GM12878 (cell line): ENCODE measurements at regions of chr2 and their contacts with region 1.

Region 1: GRCh38 chr2:27303093-27304025 is 4.9 kb downstream of the UCN start:
- DNase-seq: no peak
- ATAC-seq: peak; percentile 82
- H3K4me3 ChIP-seq: peak overlapping the region; percentile 48; the same call in 1 of the 2 replicates
- H3K27ac ChIP-seq: no peak overlapping the region
- H3K4me1 ChIP-seq: no peaks in the 10 kb centered on the region
- H3K27me3 ChIP-seq: no peaks in the 10 kb centered on the region; a peak in 1 of 4 replicates
- CTCF ChIP-seq: peak; percentile 75 to 83 (median 80)
- EP300 ChIP-seq: no peak
- POLR2A ChIP-seq: no peak
- RAD21 ChIP-seq: peak; percentile 72

Region 2: GRCh38 chr2:26964446-26965130 is 338.8 kb before region 1 on chr2:
- CTCF ChIA-PET with region 1: interaction called, 9 read pairs
- POLR2A ChIA-PET with region 1: no interaction called
- RAD21 ChIA-PET with region 1: interaction called, 9 read pairs
- SMC1A ChIA-PET with region 1: interaction called, 5 read pairs
- in situ Hi-C with region 1: no loop called
- intact Hi-C with region 1: loop called (anchors 5 kb)
- DNase-seq: no peak
- ATAC-seq: no peak
- H3K4me3 ChIP-seq: no peak overlapping the region
- H3K27ac ChIP-seq: no peak overlapping the region
- H3K4me1 ChIP-seq: no peaks in the 10 kb centered on the region
- H3K27me3 ChIP-seq: peaks cover 1 to 2% of the 10 kb centered on the region in 2 experiments; a peak in 1 of 4 replicates
- CTCF ChIP-seq: no peak
- EP300 ChIP-seq: no peak
- POLR2A ChIP-seq: no peak
- RAD21 ChIP-seq: no peak

Region 3: GRCh38 chr2:27118525-27119329 is 184.6 kb before region 1 on chr2 and contains the start of gene CGREF1:
- CTCF ChIA-PET with region 1: no interaction called
- POLR2A ChIA-PET with region 1: no interaction called
- RAD21 ChIA-PET with region 1: no interaction called
- SMC1A ChIA-PET with region 1: no interaction called
- in situ Hi-C with region 1: no loop called
- intact Hi-C with region 1: no loop called
- DNase-seq: no peak
- ATAC-seq: no peak
- H3K4me3 ChIP-seq: no peak within 1 kb of the TSS
- H3K27ac ChIP-seq: no peak within 1 kb of the TSS
- H3K4me1 ChIP-seq: peaks cover 1% of the 10 kb centered on the region; the same call in 1 of the 2 replicates
- H3K27me3 ChIP-seq: peaks cover 6 to 7% of the 10 kb centered on the region in 2 experiments
- CTCF ChIP-seq: no peak
- EP300 ChIP-seq: no peak
- POLR2A ChIP-seq: no peak
- RAD21 ChIP-seq: no peak
- polyA plus RNA-seq, gene CGREF1: not detected

Region 4: GRCh38 chr2:27133905-27134780 is 169.2 kb before region 1 on chr2 and contains the start of gene PREB:
- CTCF ChIA-PET with region 1: interaction called, 14 read pairs
- POLR2A ChIA-PET with region 1: no interaction called
- RAD21 ChIA-PET with region 1: no interaction called
- SMC1A ChIA-PET with region 1: interaction called, 7 read pairs
- in situ Hi-C with region 1: no loop called
- intact Hi-C with region 1: no loop called
- DNase-seq: peak; percentile 88
- ATAC-seq: peak; percentile 98
- H3K4me3 ChIP-seq: peak within 1 kb of the TSS; percentile 97
- H3K27ac ChIP-seq: peak within 1 kb of the TSS; percentile 90
- H3K4me1 ChIP-seq: peaks cover 8% of the 10 kb centered on the region
- H3K27me3 ChIP-seq: no peaks in the 10 kb centered on the region
- CTCF ChIP-seq: peak; percentile 38 to 43 (median 41); a peak in 4 of 6 replicates
- EP300 ChIP-seq: no peak
- POLR2A ChIP-seq: peak; percentile 89
- RAD21 ChIP-seq: peak; percentile 45; the same call in 1 of the 2 replicates
- polyA plus RNA-seq, gene PREB: 26.3 to 45.7 TPM

Region 5: GRCh38 chr2:27264753-27265535 is 38.4 kb before region 1 on chr2:
- CTCF ChIA-PET with region 1: interaction called, 10 read pairs
- POLR2A ChIA-PET with region 1: no interaction called
- RAD21 ChIA-PET with region 1: no interaction called
- SMC1A ChIA-PET with region 1: interaction called, 3 read pairs
- in situ Hi-C with region 1: no loop called
- intact Hi-C with region 1: no loop called
- DNase-seq: no peak
- ATAC-seq: peak; percentile 80
- H3K4me3 ChIP-seq: peak overlapping the region; percentile 76
- H3K27ac ChIP-seq: no peak overlapping the region
- H3K4me1 ChIP-seq: peaks cover 18% of the 10 kb centered on the region
- H3K27me3 ChIP-seq: peaks cover 23 to 41% of the 10 kb centered on the region in 2 experiments
- CTCF ChIP-seq: peak; percentile 35 to 65 (median 62); a peak in 4 of 6 replicates
- EP300 ChIP-seq: no peak
- POLR2A ChIP-seq: no peak
- RAD21 ChIP-seq: no peak

Region 6: GRCh38 chr2:27313882-27314645 is 10.7 kb after region 1 on chr2:
- CTCF ChIA-PET with region 1: interaction called, 16 read pairs
- POLR2A ChIA-PET with region 1: no interaction called
- RAD21 ChIA-PET with region 1: no interaction called
- SMC1A ChIA-PET with region 1: interaction called, 5 read pairs
- in situ Hi-C with region 1: no loop called
- intact Hi-C with region 1: no loop called
- DNase-seq: no peak
- ATAC-seq: no peak
- H3K4me3 ChIP-seq: no peak overlapping the region
- H3K27ac ChIP-seq: no peak overlapping the region
- H3K4me1 ChIP-seq: no peaks in the 10 kb centered on the region
- H3K27me3 ChIP-seq: no peaks in the 10 kb centered on the region
- CTCF ChIP-seq: no peak
- EP300 ChIP-seq: no peak
- POLR2A ChIP-seq: no peak
- RAD21 ChIP-seq: no peak

Region 7: DNA sequence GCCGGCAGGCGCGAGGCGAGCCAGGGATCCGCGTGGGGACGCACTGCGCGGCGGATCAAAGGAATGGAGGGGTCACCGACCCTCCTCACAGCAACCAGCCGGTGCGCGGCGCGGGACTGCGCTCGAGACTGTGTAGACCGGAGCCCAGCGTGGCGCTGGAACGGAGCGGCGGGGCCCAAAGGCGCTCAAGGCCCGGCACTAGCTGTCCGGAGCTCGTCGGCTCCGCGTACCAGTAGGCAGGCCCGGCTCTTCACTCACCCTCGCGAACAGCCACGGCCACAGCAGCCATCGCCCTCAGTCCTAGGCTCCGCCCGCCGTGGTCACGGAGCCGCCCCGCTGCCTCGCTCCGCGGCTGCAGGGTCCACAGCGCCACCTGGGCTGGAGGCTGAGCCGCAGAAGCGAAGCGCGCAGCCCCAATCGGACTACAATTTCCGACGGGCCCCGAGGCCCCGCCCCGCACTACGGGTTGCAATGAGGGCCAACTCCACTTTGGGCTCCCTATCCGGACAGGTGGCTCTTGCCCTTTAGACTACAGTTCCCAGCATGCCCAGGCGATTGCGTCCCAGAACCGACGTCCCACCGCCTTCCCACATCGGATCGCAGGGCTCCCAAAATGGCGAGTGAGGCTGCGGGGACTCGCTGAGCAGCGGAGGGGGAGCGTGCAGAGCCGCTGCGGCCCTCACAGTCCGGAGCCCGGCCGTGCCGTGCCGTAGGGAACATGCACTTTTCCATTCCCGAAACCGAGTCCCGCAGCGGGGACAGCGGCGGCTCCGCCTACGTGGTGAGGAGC is 66.9 kb after region 1 on chr2 and contains the starts of genes EIF2B4 and SNX17:
- CTCF ChIA-PET with region 1: interaction called, 14 read pairs
- POLR2A ChIA-PET with region 1: interaction called, 3 read pairs
- RAD21 ChIA-PET with region 1: no interaction called
- SMC1A ChIA-PET with region 1: interaction called, 6 read pairs
- in situ Hi-C with region 1: no loop called
- intact Hi-C with region 1: no loop called
- DNase-seq: peak; percentile 97
- ATAC-seq: peak; percentile 92
- H3K4me3 ChIP-seq: peak within 1 kb of the TSS; percentile 85
- H3K27ac ChIP-seq: peak within 1 kb of the TSS; percentile 93
- H3K4me1 ChIP-seq: peaks cover 4% of the 10 kb centered on the region; the same call in 1 of the 2 replicates
- H3K27me3 ChIP-seq: no peaks in the 10 kb centered on the region
- CTCF ChIP-seq: peak; percentile 74 to 99 (median 85); a peak in 5 of 6 replicates
- EP300 ChIP-seq: no peak; a peak in 1 of 4 replicates
- POLR2A ChIP-seq: peak; percentile 95
- RAD21 ChIP-seq: peak; percentile 50
- polyA plus RNA-seq, gene EIF2B4: 13.4 to 27.8 TPM
- polyA plus RNA-seq, gene SNX17: 6.5 to 18.9 TPM